Natural killer cell (primary cell): ENCODE measurements at regions of chr5 and their contacts with region 1.

Region 1: DNA sequence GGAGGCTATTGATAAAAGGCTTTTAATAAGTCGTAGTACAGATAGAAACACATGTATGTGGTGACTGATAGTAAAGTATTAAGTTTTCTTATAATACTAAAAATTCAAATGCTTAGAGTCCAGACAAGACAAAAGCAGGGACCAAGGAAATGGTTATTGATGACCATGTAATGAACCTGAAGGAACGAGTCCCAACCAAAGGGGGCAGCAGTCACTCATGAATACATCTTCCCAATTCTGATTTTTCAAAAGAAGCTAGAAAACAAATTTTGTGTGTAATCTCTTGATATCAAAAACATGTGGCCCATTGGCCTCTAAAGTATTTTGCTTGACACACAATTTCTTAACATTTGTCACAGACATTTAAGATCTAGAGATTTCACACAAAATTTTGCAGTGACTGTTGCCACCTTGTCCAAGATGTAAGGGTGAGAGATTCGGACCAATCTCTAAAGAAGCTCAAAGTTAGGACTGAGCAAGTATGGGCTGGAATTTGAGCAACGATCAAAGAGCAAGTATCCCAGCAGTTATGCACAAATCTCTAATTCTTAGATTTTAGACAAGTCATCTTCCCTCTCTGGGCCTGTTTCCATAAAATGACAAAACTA is 66.8 kb downstream of the ARL15 start:
- DNase-seq: peak in 1 of 2 donors; percentile 66
- ATAC-seq: no peak
- H3K4me3 ChIP-seq: no peak overlapping the region
- H3K4me3 Mint-ChIP-seq: no peak overlapping the region
- H3K27ac ChIP-seq: no peak overlapping the region
- H3K27ac Mint-ChIP-seq: no peak overlapping the region
- H3K4me1 ChIP-seq: no peaks in the 10 kb centered on the region
- H3K4me1 Mint-ChIP-seq: peaks cover 7 to 17% of the 10 kb centered on the region in 2 donors
- H3K27me3 ChIP-seq: no peaks in the 10 kb centered on the region
- H3K27me3 Mint-ChIP-seq: no peaks in the 10 kb centered on the region
- CTCF ChIP-seq: peak; percentile 64

Region 2: DNA sequence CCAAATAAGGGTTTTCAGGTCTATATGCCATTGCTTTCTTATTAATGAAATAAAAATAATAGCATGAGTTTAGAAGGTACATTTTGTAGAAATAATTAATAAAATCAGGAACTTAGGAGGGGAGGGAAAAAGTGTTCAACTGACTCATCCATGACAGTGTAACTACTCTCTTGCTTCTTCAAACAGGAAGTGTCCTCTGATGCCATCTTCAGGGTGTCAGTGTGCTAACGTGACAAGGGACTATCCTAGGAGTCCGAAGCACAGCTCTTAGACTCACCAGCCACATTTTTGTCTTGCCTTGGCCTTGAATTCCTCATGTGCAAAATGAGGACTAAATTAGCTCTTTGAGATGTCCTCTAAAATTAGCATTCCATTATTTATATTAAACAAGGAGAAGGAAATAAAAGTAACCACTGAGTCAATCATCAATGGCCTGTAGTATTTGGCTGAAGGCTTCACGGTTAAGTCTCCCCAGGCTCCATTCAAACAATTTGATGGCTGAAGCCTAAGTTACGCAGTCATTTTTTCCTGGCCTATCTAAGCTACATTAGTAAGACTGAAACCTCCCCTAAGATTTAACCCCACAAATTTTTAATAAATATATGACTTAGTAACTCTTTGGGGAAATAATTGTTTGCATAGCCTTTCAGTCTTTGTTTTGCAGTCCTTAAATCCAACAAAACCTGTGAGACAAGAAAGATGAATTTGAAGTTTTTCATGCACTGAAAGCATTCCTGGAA is 84.3 kb before region 1 on chr5:
- intact Hi-C with region 1: no loop called
- DNase-seq: no peak
- ATAC-seq: peak in 2 of 3 donors; percentile 52 to 60
- H3K4me3 ChIP-seq: no peak overlapping the region
- H3K4me3 Mint-ChIP-seq: no peak overlapping the region
- H3K27ac ChIP-seq: no peak overlapping the region
- H3K27ac Mint-ChIP-seq: no peak overlapping the region
- H3K4me1 ChIP-seq: no peaks in the 10 kb centered on the region
- H3K4me1 Mint-ChIP-seq: peaks cover 10 to 15% of the 10 kb centered on the region in 2 donors
- H3K27me3 ChIP-seq: no peaks in the 10 kb centered on the region
- H3K27me3 Mint-ChIP-seq: no peaks in the 10 kb centered on the region
- CTCF ChIP-seq: no peak

Region 3: DNA sequence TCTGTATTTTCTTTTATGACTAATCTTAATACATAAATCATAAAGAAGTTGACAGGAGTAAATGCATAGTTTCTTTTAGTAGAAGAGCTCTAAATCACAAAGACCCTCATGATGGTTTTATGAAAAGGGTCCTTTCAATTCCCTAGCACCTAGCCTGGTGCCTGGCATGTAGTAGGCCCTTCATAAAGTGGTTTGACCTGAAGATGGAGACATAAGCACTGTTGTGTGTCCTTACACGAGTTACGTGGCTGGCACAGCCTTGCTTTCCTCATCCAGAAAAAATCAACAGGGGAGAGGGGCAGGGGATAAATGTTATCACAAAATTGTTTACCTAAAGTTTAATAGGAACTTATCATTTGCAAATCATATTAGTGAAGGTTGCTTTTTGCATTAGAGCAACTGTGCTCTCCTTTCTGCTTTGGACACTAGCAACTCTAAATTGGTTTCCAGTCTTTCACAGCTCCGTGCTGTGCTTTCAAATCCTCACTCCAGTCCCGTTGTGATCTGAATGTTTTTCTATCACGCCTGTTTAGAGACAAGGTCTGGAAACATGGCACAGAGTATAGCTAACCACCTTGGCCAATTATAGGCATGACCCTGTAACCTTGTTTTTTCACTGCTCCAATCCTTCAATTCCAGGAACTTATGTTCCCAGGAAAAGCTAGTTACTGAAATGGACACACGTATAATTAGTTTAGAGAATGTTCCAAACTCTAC is 11.1 kb after region 1 on chr5:
- intact Hi-C with region 1: no loop called
- DNase-seq: no peak
- ATAC-seq: no peak
- H3K4me3 ChIP-seq: no peak overlapping the region
- H3K4me3 Mint-ChIP-seq: no peak overlapping the region
- H3K27ac ChIP-seq: no peak overlapping the region
- H3K27ac Mint-ChIP-seq: no peak overlapping the region
- H3K4me1 ChIP-seq: no peaks in the 10 kb centered on the region
- H3K4me1 Mint-ChIP-seq: peaks cover 47% of the 10 kb centered on the region in 2 donors
- H3K27me3 ChIP-seq: no peaks in the 10 kb centered on the region
- H3K27me3 Mint-ChIP-seq: no peaks in the 10 kb centered on the region
- CTCF ChIP-seq: no peak

Region 4: DNA sequence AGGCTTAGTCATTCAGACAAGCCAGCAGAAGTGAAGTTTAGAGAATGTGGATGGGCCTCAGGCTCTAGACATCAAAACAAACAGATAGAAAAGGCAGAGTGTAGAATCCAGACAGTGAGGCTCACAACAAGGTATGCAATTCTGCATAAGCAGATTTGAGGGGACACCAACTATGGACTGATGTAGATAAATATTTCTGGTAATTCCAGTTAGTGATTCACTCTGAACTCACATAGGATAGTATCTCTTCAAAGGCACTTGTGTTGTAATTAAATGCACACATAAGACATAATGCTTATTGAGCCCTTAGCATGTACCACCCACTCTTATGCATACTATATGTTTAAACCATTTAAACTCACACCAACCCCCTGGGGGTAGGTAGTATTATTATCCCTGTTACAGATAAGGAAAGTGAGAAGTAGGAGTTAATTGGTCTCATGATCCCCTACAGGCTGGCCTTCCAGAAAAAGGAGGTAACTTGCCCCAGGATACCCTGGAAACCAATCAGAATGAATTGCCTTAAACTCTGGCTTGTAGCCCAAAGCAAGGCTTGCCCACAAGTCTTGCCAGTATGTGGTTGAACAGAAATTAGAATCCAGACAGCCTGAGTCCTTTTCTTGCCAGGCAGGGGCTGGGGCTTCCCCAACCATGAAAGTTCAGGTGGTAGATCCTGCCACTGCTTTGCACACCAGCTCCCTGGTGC is 172.5 kb after region 1 on chr5:
- intact Hi-C with region 1: loop called (anchors 1 kb)
- DNase-seq: no peak
- ATAC-seq: no peak
- H3K4me3 ChIP-seq: no peak overlapping the region
- H3K4me3 Mint-ChIP-seq: no peak overlapping the region
- H3K27ac ChIP-seq: no peak overlapping the region
- H3K27ac Mint-ChIP-seq: no peak overlapping the region
- H3K4me1 ChIP-seq: no peaks in the 10 kb centered on the region
- H3K4me1 Mint-ChIP-seq: no peaks in the 10 kb centered on the region
- H3K27me3 ChIP-seq: no peaks in the 10 kb centered on the region
- H3K27me3 Mint-ChIP-seq: peaks cover 7 to 45% of the 10 kb centered on the region in 2 donors
- CTCF ChIP-seq: no peak

Region 5: GRCh38 chr5:54492178-54492577 is 248.6 kb after region 1 on chr5:
- intact Hi-C with region 1: loop called (anchors 1 kb)
- DNase-seq: no peak
- ATAC-seq: no peak
- H3K4me3 ChIP-seq: no peak overlapping the region
- H3K4me3 Mint-ChIP-seq: no peak overlapping the region
- H3K27ac ChIP-seq: no peak overlapping the region
- H3K27ac Mint-ChIP-seq: no peak overlapping the region
- H3K4me1 ChIP-seq: no peaks in the 10 kb centered on the region
- H3K4me1 Mint-ChIP-seq: no peaks in the 10 kb centered on the region
- H3K27me3 ChIP-seq: no peaks in the 10 kb centered on the region
- H3K27me3 Mint-ChIP-seq: peaks cover 11 to 15% of the 10 kb centered on the region in 2 donors
- CTCF ChIP-seq: no peak

Region 6: GRCh38 chr5:55162666-55163065 is 919.1 kb after region 1 on chr5:
- intact Hi-C with region 1: no loop called
- DNase-seq: no peak
- ATAC-seq: no peak
- H3K4me3 ChIP-seq: no peak overlapping the region
- H3K4me3 Mint-ChIP-seq: no peak overlapping the region
- H3K27ac ChIP-seq: no peak overlapping the region
- H3K27ac Mint-ChIP-seq: no peak overlapping the region
- H3K4me1 ChIP-seq: no peaks in the 10 kb centered on the region
- H3K4me1 Mint-ChIP-seq: peaks cover 0 to 6% of the 10 kb centered on the region in 2 donors
- H3K27me3 ChIP-seq: peaks cover 29% of the 10 kb centered on the region
- H3K27me3 Mint-ChIP-seq: peaks cover 40 to 54% of the 10 kb centered on the region in 2 donors
- CTCF ChIP-seq: no peak